Posterior vena cava (tissue), 2 donors: ENCODE measurements at regions of chr2 and their contacts with region 1.

Region 1: DNA sequence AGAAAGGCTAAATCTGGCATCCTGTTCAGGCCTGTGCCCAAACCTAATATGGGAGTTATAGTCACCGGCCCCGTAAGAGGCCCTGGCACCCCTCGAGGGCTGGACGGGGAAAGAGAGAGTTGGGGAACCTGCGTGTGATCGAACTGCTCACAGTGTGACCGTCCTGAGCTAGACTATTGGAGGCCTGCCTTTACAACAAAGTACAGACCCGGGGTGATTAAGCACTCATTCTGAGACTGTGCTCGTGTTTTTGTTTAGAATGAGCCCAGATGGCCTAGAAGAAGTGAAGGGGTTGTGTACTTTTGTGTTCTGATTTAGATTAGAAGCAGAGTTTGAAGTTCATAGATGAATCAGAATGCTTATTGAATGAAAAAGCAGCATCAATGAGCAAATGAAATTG is 115.3 kb downstream of the ACOXL start:
- DNase-seq: no peak

Region 2: DNA sequence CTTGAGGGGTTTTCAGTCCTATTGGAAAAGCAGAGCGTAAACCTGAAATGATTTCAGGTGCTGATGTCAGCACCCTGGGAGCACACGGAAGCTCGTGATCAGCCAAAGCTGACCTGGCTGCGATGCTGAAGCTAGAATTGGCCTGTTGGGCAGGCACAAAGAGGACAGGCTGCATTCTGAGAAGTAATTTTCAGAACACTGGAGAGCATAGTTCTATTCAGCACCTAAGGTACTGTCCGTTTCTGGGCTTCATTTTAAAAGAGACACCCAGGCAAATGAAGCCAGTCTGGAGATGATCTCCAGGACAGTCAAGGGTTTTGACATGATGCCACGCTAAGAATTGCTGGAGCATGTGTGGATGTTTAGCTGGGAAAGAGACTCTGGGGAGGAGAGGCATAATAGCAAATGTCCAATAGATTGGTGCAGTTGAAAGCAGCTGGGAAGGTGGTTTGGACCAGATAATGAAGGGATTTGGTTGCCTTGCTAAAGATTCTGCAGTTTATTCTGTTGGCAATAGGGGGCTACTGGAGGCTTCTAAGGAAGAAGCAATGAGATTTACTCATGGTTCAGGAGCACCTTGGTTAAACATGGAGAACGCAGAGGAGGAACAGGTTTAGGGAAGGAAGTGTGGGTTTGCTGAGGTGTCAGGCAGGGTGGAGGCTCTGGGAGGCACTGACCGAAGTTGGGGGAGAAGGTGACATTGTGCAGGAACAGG is 28.7 kb before region 1 on chr2:
- intact Hi-C with region 1: no loop called
- DNase-seq: no peak

Region 3: DNA sequence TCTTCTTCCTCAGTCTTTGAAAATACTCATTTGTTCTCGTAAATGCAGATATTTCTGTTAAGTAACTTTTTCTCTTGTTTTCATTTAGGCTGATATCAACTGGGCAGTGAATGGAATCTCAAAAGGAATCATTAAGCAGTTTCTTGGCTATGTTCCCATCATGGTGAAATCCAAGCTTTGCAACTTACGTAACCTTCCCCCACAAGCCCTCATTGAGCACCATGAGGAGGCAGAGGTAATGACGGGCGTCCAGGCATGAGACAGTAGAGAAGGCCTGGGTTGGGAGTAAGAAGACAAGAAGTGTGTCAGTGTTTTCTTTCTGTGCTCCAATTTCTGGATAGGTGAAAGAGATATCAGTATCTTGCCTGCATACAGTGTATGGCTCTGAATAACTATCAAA is 1699.7 kb after region 1 on chr2:
- intact Hi-C with region 1: loop called in 1 of 2 experiments (anchors 5 kb)
- DNase-seq: no peak